ENCODE measurements at regions of chr5 and their contacts with region 1.

Region 1: DNA sequence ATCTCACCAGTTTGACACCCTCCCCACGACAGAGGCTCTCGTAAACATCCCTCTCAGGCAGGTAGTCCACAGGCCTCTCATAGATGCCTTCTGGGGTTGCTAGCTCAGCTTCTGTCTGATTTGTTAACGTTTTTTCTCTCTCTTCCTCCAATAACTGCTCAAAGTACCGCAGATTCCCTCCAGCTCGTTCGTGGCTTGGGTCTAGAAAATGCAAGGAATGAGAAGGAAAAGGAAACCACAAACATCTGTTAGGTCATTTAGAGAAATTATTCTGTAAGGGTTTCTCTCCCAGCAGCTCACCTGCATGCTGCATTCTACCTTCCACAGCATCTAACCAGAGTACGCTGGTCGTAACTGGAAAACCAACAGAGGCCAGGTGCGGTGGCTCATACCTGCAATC is 18.5 kb downstream of the P4HA2 start:
- DNase-seq: no peak
- H3K4me3 Mint-ChIP-seq: no peak overlapping the region
- H3K27ac Mint-ChIP-seq: no peak overlapping the region
- H3K4me1 Mint-ChIP-seq: no peaks in the 10 kb centered on the region
- H3K27me3 Mint-ChIP-seq: no peaks in the 10 kb centered on the region

Region 2: GRCh38 chr5:132180134-132180745 is 28.9 kb before region 1 on chr5:
- CTCF ChIA-PET with region 1: no interaction called
- POLR2A ChIA-PET with region 1: no interaction called
- DNase-seq: peak; percentile 11
- H3K4me3 Mint-ChIP-seq: no peak overlapping the region
- H3K27ac Mint-ChIP-seq: no peak overlapping the region
- H3K4me1 Mint-ChIP-seq: peaks cover 39% of the 10 kb centered on the region
- H3K27me3 Mint-ChIP-seq: no peaks in the 10 kb centered on the region

Region 3: DNA sequence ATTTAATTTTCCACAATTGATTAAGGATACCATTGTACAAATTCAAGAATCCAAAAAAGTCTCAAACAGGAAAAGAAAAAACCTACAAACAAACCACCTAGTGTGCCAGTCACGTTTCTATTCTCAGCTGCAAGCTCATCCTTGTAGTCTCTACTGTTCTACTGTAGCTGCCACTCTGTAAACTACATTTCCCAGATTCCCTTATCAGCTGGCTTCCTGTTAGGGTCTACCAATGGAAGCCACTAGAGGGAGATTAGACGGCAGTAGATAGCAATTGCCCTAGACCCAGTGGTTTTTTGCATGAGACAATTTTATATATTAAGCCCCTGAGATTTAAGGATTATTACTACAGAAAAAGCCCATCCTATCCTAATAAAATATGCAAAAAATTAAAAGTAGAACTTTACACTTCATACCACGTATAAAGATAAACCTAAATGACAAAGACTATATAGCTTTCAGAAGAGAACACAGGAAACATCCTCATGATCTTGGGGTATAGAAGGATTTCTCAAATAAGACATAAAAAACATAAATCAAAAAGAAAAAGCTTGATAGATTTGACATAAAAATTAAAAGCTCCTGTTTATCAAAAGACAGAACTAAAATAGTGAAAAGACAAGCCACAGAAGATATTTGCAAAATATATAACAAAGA is 18.8 kb before region 1 on chr5:
- CTCF ChIA-PET with region 1: interaction called, 11 read pairs
- POLR2A ChIA-PET with region 1: no interaction called
- DNase-seq: peak; percentile 24
- H3K4me3 Mint-ChIP-seq: no peak overlapping the region
- H3K27ac Mint-ChIP-seq: no peak overlapping the region
- H3K4me1 Mint-ChIP-seq: peaks cover 6% of the 10 kb centered on the region
- H3K27me3 Mint-ChIP-seq: peaks cover 16% of the 10 kb centered on the region